ENCODE measurements at regions of chr16 and their contacts with region 1.

Region 1: GRCh38 chr16:76639685-76640289 is 362.6 kb downstream of the CNTNAP4 start:
- DNase-seq: peak; percentile 60
- H3K4me3 Mint-ChIP-seq: no peak overlapping the region
- H3K27ac Mint-ChIP-seq: no peak overlapping the region
- H3K4me1 Mint-ChIP-seq: no peaks in the 10 kb centered on the region
- H3K27me3 Mint-ChIP-seq: no peaks in the 10 kb centered on the region
- CTCF ChIP-seq: peak; percentile 27

Region 2: DNA sequence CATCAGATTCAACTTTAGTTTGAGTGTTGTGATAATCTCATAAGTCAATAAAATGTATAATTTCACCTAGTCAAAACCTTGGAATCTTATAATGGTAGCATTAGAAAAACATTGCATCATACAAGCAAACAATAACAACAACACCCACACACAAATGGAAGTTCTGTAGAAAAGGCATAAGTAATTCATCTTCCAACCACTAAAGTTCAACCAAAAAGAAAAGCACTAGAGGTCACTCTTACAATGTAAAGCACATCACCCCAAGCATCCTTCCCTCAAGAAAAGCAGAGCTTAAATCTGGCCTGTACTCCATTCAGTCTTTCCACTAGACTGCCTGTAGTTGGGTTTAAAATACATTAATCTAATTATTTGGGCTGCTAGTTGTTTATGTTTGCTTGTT is 360.8 kb before region 1 on chr16:
- CTCF ChIA-PET with region 1: no interaction called
- intact Hi-C with region 1: loop called (anchors 1 kb)
- DNase-seq: no peak
- H3K4me3 Mint-ChIP-seq: no peak overlapping the region
- H3K27ac Mint-ChIP-seq: no peak overlapping the region
- H3K4me1 Mint-ChIP-seq: no peaks in the 10 kb centered on the region
- H3K27me3 Mint-ChIP-seq: peaks cover 21% of the 10 kb centered on the region
- CTCF ChIP-seq: no peak

Region 3: GRCh38 chr16:76622876-76623275 is 16.9 kb before region 1 on chr16:
- CTCF ChIA-PET with region 1: no interaction called
- intact Hi-C with region 1: no loop called
- DNase-seq: no peak
- H3K4me3 Mint-ChIP-seq: no peak overlapping the region
- H3K27ac Mint-ChIP-seq: no peak overlapping the region
- H3K4me1 Mint-ChIP-seq: no peaks in the 10 kb centered on the region
- H3K27me3 Mint-ChIP-seq: no peaks in the 10 kb centered on the region
- CTCF ChIP-seq: no peak

Measured in Calu3 (cell line).